Activated CD4-positive, alpha-beta T cell treated with anti-CD3 and anti-CD28 coated beads for 36 hours (primary cell): ENCODE measurements at regions of chr3 and their contacts with region 1.

Region 1: GRCh38 chr3:197730200-197730599 is 6.5 kb downstream of the RUBCN start:
- DNase-seq: peak; percentile 29
- ATAC-seq: peak; percentile 51
- H3K4me3 Mint-ChIP-seq: no peak overlapping the region
- H3K27ac Mint-ChIP-seq: peak overlapping the region; percentile 10
- H3K4me1 Mint-ChIP-seq: peaks cover 24% of the 10 kb centered on the region
- H3K27me3 Mint-ChIP-seq: no peaks in the 10 kb centered on the region

Region 2: DNA sequence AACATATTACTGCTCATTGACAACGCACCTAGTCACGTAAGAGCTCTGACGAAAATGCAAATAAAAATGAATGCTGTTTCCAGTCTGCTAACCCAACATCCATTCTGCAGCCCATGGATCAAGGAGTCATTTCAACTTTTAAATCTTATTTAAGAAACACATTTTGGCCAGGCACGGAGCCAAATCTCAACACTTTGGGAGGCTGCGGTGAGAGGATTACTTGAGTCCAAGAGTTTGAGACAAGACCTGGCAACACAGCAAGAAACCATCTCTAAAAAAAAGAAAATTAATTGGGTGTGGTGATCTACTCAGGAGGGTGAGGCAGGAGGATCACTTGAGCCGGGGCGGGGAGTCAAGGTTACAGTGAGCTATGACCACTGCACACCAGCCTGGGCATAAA is 1369.6 kb before region 1 on chr3:
- CTCF ChIA-PET with region 1: no interaction called
- POLR2A ChIA-PET with region 1: no interaction called
- intact Hi-C with region 1: no loop called
- DNase-seq: no peak
- ATAC-seq: no peak
- H3K4me3 Mint-ChIP-seq: no peak overlapping the region
- H3K27ac Mint-ChIP-seq: no peak overlapping the region
- H3K4me1 Mint-ChIP-seq: peaks cover 9% of the 10 kb centered on the region
- H3K27me3 Mint-ChIP-seq: no peaks in the 10 kb centered on the region

Region 3: DNA sequence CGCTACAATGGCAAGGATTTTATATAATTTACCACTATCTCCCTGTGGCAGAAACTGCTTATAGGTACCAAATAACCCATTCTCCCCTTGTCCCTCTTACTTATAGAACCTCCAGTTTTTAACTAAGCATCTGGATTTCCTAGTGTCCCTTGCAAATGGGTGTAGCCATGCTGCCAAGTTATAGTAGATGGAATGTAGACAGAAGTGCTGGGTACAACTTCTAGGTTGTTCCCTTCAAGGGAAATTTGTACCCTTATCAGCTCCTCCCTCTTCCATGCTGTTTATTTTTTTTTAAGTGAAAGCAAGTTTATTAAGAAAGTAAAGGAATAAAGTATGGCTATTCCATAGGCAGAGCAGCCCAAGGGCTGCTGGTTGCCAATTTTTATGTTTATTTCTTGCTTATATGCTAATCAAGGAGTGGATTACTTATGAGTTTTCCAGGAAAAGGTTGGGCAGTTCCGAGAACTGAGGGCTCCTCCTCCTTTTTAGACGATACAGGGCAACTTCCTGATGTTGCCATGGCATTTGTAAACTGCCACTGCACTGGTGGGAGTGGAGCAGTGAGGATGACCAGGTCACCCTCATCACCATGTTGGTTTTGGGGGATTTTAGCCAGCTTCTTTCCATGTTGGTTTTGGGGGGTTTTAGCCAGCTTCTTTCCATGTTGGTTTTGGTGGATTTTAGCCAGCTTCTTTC is 1351.9 kb before region 1 on chr3:
- CTCF ChIA-PET with region 1: no interaction called
- POLR2A ChIA-PET with region 1: interaction called, 11 read pairs
- intact Hi-C with region 1: no loop called
- DNase-seq: peak; percentile 33
- ATAC-seq: no peak
- H3K4me3 Mint-ChIP-seq: no peak overlapping the region
- H3K27ac Mint-ChIP-seq: no peak overlapping the region
- H3K4me1 Mint-ChIP-seq: peaks cover 3% of the 10 kb centered on the region
- H3K27me3 Mint-ChIP-seq: no peaks in the 10 kb centered on the region

Region 4: DNA sequence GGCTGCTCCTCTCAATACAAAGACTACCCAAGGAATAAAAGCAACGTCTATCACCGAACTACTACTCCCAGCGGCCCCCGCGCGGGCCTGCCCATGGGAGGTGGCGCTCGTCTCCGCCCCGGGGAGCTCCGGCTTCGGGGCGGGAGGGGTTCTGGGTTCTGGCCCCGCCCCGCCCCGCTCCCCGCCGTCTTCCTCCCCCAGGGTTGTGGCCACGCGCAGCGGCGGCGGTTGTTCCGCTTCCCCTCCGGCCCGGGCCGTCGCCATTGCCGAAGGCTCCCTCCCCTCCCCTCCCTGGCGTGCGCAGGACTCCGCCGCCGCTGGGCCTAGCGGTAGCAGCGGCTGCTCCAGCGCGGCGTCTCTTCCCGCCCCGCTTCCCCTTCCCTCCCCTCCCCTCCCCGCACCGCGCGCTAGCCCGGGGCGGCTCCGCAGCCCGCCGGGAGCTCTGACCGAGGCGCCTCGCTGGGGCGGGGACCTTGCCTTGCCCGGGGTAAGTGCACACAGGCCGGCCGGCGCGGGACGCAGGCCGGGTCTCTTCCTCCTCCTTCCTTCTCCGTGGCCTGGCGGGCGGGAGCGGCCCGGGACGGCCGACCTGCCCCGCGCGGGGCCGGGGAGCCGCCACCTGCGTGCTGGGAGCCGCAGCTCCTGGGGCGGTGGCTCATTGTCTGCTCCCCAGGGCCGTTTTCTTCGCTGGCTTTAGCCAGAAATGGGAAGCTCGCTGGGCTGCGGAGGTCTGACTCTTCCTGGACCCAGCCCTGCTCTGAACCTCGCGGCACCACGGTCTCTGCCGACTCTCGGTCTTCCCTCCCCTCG is 990.3 kb before region 1 on chr3 and contains the start of gene PAK2:
- CTCF ChIA-PET with region 1: no interaction called
- POLR2A ChIA-PET with region 1: no interaction called
- intact Hi-C with region 1: no loop called
- DNase-seq: peak; percentile 94
- ATAC-seq: peak; percentile 92
- H3K4me3 Mint-ChIP-seq: peak within 1 kb of the TSS; percentile 93
- H3K27ac Mint-ChIP-seq: peak within 1 kb of the TSS; percentile 99
- H3K4me1 Mint-ChIP-seq: peaks cover 25% of the 10 kb centered on the region
- H3K27me3 Mint-ChIP-seq: no peaks in the 10 kb centered on the region
- total RNA-seq, gene PAK2: 57.6 to 82.2 TPM

Region 5: DNA sequence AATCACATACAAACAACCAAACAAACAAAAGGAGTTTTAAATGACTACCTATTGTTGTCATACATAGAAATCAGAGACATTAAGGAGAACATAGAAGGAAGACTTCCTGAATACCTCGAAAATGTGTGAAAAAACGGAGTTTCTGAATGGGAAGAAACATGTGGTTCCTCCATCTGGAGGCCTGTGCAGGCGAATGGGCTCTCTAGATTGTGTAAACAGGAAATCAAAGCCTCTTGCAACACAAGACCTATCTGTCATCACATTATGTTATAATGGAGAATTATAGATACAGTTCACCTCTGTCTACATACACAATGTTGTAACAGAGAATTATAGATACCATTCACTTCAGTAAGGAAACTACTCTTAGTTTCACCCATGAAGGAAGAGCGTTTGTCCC is 37.6 kb before region 1 on chr3:
- CTCF ChIA-PET with region 1: no interaction called
- POLR2A ChIA-PET with region 1: no interaction called
- intact Hi-C with region 1: no loop called
- DNase-seq: no peak
- ATAC-seq: no peak
- H3K4me3 Mint-ChIP-seq: no peak overlapping the region
- H3K27ac Mint-ChIP-seq: no peak overlapping the region
- H3K4me1 Mint-ChIP-seq: no peaks in the 10 kb centered on the region
- H3K27me3 Mint-ChIP-seq: no peaks in the 10 kb centered on the region

Region 6: GRCh38 chr3:197836244-197836643 is 106.0 kb after region 1 on chr3:
- CTCF ChIA-PET with region 1: no interaction called
- POLR2A ChIA-PET with region 1: no interaction called
- intact Hi-C with region 1: no loop called
- DNase-seq: no peak
- ATAC-seq: no peak
- H3K4me3 Mint-ChIP-seq: no peak overlapping the region
- H3K27ac Mint-ChIP-seq: no peak overlapping the region
- H3K4me1 Mint-ChIP-seq: peaks cover 5% of the 10 kb centered on the region
- H3K27me3 Mint-ChIP-seq: no peaks in the 10 kb centered on the region